WTC11 (cell line): ENCODE measurements at regions of chr19 and their contacts with region 1.

Region 1: DNA sequence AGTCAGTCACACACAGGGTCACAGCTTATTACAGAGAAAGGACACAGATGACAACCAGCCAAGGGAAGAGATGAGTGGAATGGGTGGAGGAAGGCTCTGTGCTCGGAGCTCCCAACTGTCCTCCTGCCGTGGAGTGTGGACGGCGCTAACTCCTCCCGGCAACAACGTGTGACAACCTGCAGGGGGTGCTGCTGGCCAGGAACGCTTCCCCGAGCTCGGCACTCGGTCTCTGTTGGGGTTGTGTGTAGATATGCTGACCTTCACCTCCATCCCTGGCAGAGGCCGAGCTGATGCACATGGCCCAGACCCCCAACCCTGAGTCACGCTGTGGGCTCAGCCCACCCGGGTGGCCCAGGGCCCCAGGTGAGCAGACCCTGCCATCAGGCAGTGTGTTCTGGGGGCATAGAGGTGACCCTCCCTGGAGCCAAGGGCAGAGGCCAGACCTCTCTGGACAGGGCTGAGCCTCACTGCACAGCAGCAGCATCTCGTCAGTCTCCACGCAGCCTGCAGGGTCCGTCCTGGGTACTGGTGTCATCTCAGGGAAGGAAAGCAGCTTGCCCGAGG is 14.1 kb downstream of the ZNF444 start:
- DNase-seq: peak; percentile 78
- ATAC-seq: peak; percentile 70
- H3K4me3 Mint-ChIP-seq: no peak overlapping the region
- H3K27ac Mint-ChIP-seq: no peak overlapping the region
- H3K4me1 Mint-ChIP-seq: peaks cover 24% of the 10 kb centered on the region
- H3K27me3 Mint-ChIP-seq: no peaks in the 10 kb centered on the region
- CTCF ChIP-seq: peak; percentile 70

Region 2: GRCh38 chr19:56058307-56058706 is 96.9 kb before region 1 on chr19:
- CTCF ChIA-PET with region 1: no interaction called
- POLR2A ChIA-PET with region 1: no interaction called
- DNase-seq: no peak
- ATAC-seq: no peak
- H3K4me3 Mint-ChIP-seq: no peak overlapping the region
- H3K27ac Mint-ChIP-seq: no peak overlapping the region
- H3K4me1 Mint-ChIP-seq: no peaks in the 10 kb centered on the region
- H3K27me3 Mint-ChIP-seq: peaks cover 24% of the 10 kb centered on the region
- CTCF ChIP-seq: no peak

Region 3: GRCh38 chr19:56080669-56081401 is 74.4 kb before region 1 on chr19:
- CTCF ChIA-PET with region 1: interaction called, 32 read pairs
- POLR2A ChIA-PET with region 1: interaction called, 3 read pairs
- DNase-seq: peak; percentile 91
- ATAC-seq: peak; percentile 81
- H3K4me3 Mint-ChIP-seq: peak overlapping the region; percentile 85
- H3K27ac Mint-ChIP-seq: no peak overlapping the region
- H3K4me1 Mint-ChIP-seq: peaks cover 23% of the 10 kb centered on the region
- H3K27me3 Mint-ChIP-seq: peaks cover 15% of the 10 kb centered on the region
- CTCF ChIP-seq: peak; percentile 64

Region 4: DNA sequence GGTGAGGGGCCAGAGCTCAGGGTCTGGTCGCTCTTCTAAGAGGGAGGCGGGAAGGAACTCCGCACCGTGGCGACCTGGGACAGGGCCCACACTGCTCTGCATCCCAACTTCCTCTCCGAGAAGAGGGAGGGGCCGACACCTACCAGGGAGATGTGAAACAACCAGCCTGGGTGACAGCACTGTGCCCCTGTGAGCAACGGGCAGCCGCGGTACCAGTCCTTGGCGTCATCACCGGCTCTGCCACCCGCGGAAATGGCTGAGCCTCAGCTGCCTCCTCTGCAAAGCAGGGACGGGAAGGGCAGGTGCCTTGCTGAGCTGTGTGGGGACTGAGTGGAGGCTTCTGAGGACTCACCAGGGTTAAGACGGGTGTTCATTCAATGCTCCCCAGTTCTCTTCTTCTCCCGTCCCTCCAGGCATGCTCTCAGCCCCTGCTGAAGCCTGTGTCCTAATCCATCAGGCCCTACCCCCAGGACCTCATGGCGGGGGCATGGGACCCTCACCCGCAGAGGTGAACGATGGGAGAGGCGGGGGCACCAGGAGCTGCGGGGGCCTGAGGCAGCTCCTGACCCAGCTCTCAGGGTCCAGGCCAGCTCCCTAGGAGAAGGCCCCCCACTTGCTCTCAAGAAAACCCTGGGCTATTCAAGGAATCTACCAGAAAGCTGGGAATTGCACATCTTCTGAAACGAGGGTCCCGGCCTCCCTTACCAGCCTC is 43.4 kb before region 1 on chr19:
- CTCF ChIA-PET with region 1: interaction called, 16 read pairs
- POLR2A ChIA-PET with region 1: no interaction called
- DNase-seq: no peak
- ATAC-seq: peak; percentile 6; the same call in 1 of the 2 replicates
- H3K4me3 Mint-ChIP-seq: no peak overlapping the region
- H3K27ac Mint-ChIP-seq: peak overlapping the region; percentile 65
- H3K4me1 Mint-ChIP-seq: peaks cover 70% of the 10 kb centered on the region
- H3K27me3 Mint-ChIP-seq: no peaks in the 10 kb centered on the region
- CTCF ChIP-seq: no peak

Region 5: GRCh38 chr19:56170261-56170660 is 15.1 kb after region 1 on chr19:
- CTCF ChIA-PET with region 1: interaction called, 73 read pairs
- POLR2A ChIA-PET with region 1: interaction called, 3 read pairs
- DNase-seq: no peak
- ATAC-seq: no peak
- H3K4me3 Mint-ChIP-seq: no peak overlapping the region
- H3K27ac Mint-ChIP-seq: no peak overlapping the region
- H3K4me1 Mint-ChIP-seq: peaks cover under 1% of the 10 kb centered on the region; the same call in 1 of the 2 replicates
- H3K27me3 Mint-ChIP-seq: peaks cover 5% of the 10 kb centered on the region; the same call in 1 of the 2 replicates
- CTCF ChIP-seq: no peak

Region 6: GRCh38 chr19:56217039-56217949 is 62.1 kb after region 1 on chr19:
- CTCF ChIA-PET with region 1: interaction called, 12 read pairs
- POLR2A ChIA-PET with region 1: no interaction called
- DNase-seq: peak; percentile 72
- ATAC-seq: peak; percentile 77
- H3K4me3 Mint-ChIP-seq: peak overlapping the region; percentile 57
- H3K27ac Mint-ChIP-seq: 0 out of 2 replicates have a peak overlapping the region, but pooled peaks have one; percentile 63
- H3K4me1 Mint-ChIP-seq: peaks cover 15% of the 10 kb centered on the region
- H3K27me3 Mint-ChIP-seq: peaks cover 15% of the 10 kb centered on the region
- CTCF ChIP-seq: no peak

Region 7: DNA sequence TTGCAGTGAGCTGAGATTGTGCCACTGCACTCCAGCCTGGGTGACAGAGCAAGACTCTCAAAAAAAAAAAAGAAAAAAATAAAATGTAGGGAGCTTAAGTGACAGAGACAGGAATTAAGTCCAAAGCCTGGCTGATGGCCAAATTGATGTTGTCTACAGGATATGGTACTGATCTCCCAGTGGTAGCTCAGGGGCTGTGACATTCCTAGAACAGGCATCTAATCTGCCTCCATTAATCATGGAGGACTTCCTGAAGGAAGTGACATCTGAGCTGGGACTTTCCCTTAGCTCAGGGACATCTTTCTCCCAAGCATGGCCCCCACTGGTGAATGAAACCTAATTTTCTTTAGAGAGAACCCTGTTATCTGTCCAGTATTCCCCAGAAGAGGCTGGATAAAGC is 105.9 kb after region 1 on chr19:
- CTCF ChIA-PET with region 1: interaction called, 10 read pairs
- POLR2A ChIA-PET with region 1: no interaction called
- DNase-seq: no peak
- ATAC-seq: no peak
- H3K4me3 Mint-ChIP-seq: no peak overlapping the region
- H3K27ac Mint-ChIP-seq: no peak overlapping the region
- H3K4me1 Mint-ChIP-seq: no peaks in the 10 kb centered on the region
- H3K27me3 Mint-ChIP-seq: no peaks in the 10 kb centered on the region
- CTCF ChIP-seq: no peak